ENCODE measurements at regions of chr10 and their contacts with region 1.

Region 1: DNA sequence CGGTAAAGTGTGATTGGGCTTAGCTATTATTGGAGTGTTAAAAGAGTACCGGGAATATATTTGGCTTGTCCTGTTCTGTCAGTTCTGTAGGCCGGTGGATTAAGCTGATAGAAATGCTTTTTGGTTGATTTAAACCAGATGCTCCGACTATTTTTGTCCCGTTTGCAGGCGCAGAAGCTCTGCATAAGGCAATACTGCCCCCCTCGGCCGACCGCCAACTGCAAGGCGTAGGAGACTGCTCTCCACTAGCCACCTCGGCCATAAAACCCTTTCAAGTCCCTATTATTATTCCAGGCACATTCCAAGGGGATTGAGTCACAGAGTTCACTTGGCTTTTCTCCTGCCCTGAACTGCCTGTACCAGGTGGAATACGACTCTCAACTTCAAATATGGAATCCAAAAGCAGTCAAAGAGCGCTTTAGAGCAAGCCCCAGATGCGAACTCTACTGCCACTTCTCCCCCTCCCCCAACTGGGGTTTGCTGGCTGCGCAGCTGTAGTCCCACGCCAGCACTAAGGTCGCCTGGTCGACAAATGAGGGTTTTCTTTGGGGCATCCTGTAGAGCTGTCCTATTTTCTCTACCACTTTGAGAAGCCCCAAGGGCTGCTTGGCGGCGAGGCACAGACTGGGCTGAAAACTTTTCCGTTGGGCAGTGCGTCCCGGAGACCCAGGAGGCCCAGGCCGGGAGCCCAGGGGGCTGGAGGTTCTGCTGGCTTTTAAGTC is 108.3 kb downstream of the REEP3 start:
- DNase-seq: peak; percentile 91 to 97 (median 96)
- H3K4me3 ChIP-seq: peak overlapping the region; percentile 53 to 84 (median 75)
- H3K27ac ChIP-seq: peak overlapping the region; percentile 73 to 99 (median 95)
- H3K27me3 ChIP-seq: no peaks in the 10 kb centered on the region
- CTCF ChIP-seq: peak; percentile 42 to 89 (median 74)

Region 2: GRCh38 chr10:63173468-63174232 is 455.9 kb before region 1 on chr10:
- intact Hi-C with region 1: loop called (anchors 5 to 10 kb)
- DNase-seq: no peak
- H3K4me3 ChIP-seq: no peak overlapping the region
- H3K27ac ChIP-seq: peak overlapping the region in 20 of 59 donors; percentile 11 to 57 (median 30)
- H3K27me3 ChIP-seq: no peaks in the 10 kb centered on the region
- CTCF ChIP-seq: no peak

Region 3: DNA sequence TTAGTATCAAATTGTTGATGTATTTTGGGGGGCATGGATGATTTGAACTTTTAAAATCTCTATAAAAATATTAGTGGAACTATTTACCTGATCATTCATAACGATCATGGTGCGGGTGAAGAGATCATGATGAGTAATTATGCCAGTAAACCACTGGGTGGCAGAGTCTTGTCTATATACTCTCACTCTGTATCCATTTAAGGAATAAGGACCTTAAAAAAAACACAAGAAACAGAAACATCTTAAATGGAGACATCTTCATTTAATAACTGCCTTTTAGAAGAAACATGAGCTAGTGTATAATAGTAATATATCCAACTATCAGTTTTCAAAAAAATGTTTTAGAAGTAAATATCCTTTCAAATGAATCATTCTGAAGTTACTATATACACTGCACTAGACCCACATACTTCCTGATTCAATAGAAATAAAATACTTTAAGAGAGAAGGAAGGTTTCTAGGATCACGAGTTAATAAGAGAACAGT is 412.4 kb before region 1 on chr10:
- intact Hi-C with region 1: loop called in 1 of 2 experiments (anchors 5 kb)
- DNase-seq: no peak
- H3K4me3 ChIP-seq: no peak overlapping the region
- H3K27ac ChIP-seq: peak overlapping the region in 2 of 59 donors; percentile 1 to 15
- H3K27me3 ChIP-seq: no peaks in the 10 kb centered on the region
- CTCF ChIP-seq: peak; percentile 52 to 93 (median 80)

Region 4: DNA sequence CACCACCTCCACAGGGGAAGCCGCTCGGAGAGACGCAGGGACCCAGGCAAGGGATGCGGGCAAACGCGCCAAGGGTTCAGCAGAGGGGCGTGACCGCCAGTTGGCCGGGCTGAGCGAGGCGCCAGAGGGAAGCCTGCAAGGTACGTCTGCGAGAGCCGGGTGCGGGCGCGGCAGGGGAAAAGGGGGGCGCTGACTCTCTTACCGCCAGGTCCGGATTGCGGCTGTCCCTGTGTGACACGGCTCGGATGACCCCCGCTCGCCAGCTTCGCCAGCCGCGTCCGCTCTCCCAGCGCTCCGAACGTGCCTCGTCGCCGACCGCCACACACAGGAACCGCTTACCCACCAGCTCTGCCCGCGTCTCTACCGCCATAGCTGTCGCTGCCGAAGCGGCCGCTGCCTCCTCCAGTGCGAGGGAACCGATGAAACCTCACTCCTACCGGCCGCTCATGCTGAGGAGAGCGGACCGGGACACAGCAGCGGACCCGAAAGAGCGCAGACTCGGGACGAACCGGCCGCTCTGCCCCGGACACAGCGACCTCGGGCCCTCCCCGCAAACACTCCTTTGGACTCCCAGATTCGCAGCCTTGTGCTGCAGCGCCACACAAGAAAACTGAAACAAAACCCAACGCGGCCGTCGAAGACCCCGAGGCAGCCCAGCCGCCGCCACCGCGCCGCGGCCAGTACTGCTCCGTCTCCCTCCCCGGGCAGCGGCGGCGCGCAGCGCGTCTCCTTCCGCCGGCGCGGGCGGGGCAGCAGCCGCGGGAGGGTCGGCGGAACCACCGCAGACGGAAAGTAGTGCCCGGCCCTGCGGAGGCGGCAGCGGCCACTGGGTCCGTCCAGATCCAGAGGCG is 164.0 kb before region 1 on chr10 and contains the start of gene JMJD1C:
- intact Hi-C with region 1: loop called (anchors 2 kb)
- DNase-seq: peak; percentile 44 to 81 (median 58)
- H3K4me3 ChIP-seq: peak within 1 kb of the TSS; percentile 67 to 98 (median 84)
- H3K27ac ChIP-seq: peak within 1 kb of the TSS; percentile 53 to 97 (median 90)
- H3K27me3 ChIP-seq: no peaks in the 10 kb centered on the region
- CTCF ChIP-seq: peak in 26 of 56 donors; percentile 3 to 41 (median 10)
- total RNA-seq, gene JMJD1C: 80.5 to 152 (median 104) TPM

Region 5: DNA sequence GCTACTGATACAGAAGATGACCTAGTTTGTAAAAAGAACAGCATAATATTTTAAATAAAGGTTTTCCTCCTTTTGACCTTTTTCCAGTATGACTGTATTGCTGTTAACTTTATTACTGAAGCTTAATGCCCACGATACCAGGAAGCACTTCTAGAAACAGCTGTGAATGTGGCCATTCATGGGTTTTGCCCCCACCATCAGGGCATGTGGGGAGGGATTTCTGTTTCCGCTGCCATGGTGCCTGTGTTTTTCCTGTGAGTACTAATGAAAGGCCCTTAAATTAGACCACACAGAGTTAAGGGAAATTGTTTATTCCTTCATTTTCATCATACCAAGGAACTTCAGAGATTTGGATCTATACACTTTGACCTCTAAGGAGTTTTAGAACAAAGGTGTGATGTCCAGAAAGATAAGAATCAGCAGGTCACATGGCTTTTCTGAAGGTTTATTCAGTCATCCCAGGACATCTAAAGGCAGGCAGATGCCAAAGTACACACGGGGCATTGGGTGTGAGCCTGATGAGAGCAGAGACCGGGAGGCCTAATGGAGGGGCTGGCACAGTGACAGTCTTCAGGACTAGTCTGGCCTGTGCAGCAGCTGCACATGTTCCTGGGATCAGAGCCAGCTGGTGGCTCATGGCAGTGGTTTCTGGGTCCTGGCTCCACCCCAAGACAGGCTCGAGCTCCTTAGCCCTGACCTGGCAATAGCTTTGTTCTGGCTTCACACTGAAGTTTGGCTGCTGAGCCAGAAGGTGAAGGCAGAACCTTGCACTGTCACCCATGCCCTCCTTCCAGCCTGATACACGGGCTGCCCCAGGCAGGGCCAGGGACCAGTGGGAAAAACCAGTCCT is 82.6 kb after region 1 on chr10:
- intact Hi-C with region 1: loop called in 1 of 2 experiments (anchors 5 kb)
- DNase-seq: peak; percentile 43 to 79 (median 70)
- H3K4me3 ChIP-seq: peak overlapping the region in 2 of 59 donors; percentile 12 to 36
- H3K27ac ChIP-seq: peak overlapping the region in 54 of 59 donors; percentile 8 to 87 (median 68)
- H3K27me3 ChIP-seq: no peaks in the 10 kb centered on the region
- CTCF ChIP-seq: no peak